ENCODE measurements at regions of chr2 and their contacts with region 1.

Region 1: GRCh38 chr2:98649135-98649991 is 41.0 kb downstream of the UNC50 start:
- DNase-seq: peak; percentile 70
- H3K4me3 Mint-ChIP-seq: no peak overlapping the region
- H3K27ac Mint-ChIP-seq: peak overlapping the region; percentile 2
- H3K4me1 Mint-ChIP-seq: peaks cover 51% of the 10 kb centered on the region
- H3K27me3 Mint-ChIP-seq: no peaks in the 10 kb centered on the region

Region 2: GRCh38 chr2:98216616-98217015 is 432.7 kb before region 1 on chr2:
- intact Hi-C with region 1: no loop called
- DNase-seq: no peak
- H3K4me3 Mint-ChIP-seq: no peak overlapping the region
- H3K27ac Mint-ChIP-seq: no peak overlapping the region
- H3K4me1 Mint-ChIP-seq: no peaks in the 10 kb centered on the region
- H3K27me3 Mint-ChIP-seq: peaks cover 3% of the 10 kb centered on the region

Region 3: DNA sequence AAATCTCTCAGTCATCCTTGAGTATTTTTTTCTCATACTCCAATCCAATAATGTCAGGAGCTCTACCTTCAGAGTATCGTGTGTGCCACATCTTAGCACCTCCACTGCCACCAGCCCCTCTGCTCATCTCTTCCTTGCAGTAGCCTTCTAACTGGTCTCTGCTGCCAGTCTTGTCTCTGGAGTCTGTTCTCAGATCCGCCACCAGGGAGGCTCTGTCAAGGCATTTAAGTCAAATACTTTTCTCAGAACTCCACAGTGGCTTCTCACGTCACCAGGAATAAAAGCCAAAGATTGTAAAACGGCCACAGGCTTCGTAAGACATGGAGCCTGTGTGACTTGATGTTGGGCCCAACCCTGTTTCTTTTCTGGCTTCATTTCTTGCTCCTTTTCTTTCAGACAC is 33.9 kb before region 1 on chr2:
- intact Hi-C with region 1: no loop called
- DNase-seq: no peak
- H3K4me3 Mint-ChIP-seq: no peak overlapping the region
- H3K27ac Mint-ChIP-seq: peak overlapping the region; percentile 32
- H3K4me1 Mint-ChIP-seq: peaks cover 53% of the 10 kb centered on the region
- H3K27me3 Mint-ChIP-seq: no peaks in the 10 kb centered on the region

Region 4: DNA sequence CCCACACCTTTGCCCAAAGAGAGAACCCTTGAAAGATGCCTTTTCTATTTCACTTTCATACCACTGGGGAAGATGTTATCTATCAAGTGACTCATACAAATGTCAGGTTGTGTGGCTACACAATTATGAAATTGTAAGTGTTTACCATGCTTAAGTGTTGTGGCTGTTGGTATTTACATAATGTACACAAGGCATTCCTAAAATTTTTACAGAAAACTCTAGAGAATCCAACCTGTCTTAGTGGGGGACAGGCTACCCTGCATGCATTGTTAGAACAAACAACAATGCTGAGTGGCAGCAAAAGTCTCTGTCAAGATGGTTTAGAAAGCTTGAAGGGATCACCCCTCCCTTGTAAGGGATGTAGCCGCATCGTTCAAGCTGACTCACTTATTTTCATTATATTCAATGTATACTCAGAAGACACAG is 87.1 kb after region 1 on chr2:
- intact Hi-C with region 1: loop called (anchors 1 kb)
- DNase-seq: peak; percentile 26
- H3K4me3 Mint-ChIP-seq: peak overlapping the region; percentile 57
- H3K27ac Mint-ChIP-seq: peak overlapping the region; percentile 69
- H3K4me1 Mint-ChIP-seq: peaks cover 66% of the 10 kb centered on the region
- H3K27me3 Mint-ChIP-seq: peaks cover 2% of the 10 kb centered on the region

Region 5: GRCh38 chr2:98761267-98761781 is 112.0 kb after region 1 on chr2:
- intact Hi-C with region 1: loop called (anchors 2 kb)
- DNase-seq: peak; percentile 46
- H3K4me3 Mint-ChIP-seq: peak overlapping the region; percentile 62
- H3K27ac Mint-ChIP-seq: peak overlapping the region; percentile 90
- H3K4me1 Mint-ChIP-seq: peaks cover 81% of the 10 kb centered on the region
- H3K27me3 Mint-ChIP-seq: no peaks in the 10 kb centered on the region

Region 6: DNA sequence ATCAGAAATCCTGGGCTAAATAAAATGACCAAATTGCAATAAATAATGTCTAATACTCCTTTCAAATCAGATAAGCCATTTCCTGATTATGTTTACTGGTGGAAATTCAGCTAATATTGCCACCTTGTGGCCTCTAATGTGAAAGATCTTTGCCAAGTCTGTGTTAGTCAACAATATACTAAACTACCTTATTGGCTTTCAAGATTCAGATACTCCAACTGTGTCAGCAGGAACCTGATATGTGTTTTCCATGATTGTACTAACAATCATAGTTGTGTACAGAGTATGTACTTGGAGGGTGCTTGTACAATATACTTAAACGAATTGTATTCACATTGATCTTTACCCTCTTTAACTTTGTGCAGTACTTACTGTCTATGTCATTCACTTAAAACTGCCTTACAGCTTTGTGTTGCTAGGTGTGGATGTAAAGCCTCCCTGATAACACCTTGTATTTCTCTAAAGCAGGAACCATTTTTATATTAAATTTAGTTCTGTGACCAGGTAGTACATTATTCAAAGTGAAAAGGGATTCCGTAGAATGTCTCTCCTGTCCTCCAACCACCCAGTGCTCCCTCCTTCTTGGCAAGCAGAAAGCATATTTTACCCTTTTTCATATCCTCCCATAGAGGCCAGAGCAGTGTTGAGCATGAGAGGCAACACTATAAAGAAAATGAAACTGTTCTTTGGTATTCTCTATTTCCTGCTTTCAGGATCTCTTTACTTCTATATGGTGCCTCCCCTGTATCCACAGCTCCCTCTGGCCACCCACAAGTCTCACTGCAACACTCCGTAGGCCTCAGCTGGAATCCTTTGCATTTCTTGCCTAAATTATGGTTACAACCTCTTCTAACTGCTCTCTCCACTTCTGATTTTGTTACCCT is 417.0 kb after region 1 on chr2:
- intact Hi-C with region 1: loop called (anchors 1 kb)
- DNase-seq: peak; percentile 6
- H3K4me3 Mint-ChIP-seq: no peak overlapping the region
- H3K27ac Mint-ChIP-seq: no peak overlapping the region
- H3K4me1 Mint-ChIP-seq: no peaks in the 10 kb centered on the region
- H3K27me3 Mint-ChIP-seq: peaks cover 6% of the 10 kb centered on the region